Caco-2 (cell line): ENCODE measurements at regions of chrX and their contacts with region 1.

Region 1: DNA sequence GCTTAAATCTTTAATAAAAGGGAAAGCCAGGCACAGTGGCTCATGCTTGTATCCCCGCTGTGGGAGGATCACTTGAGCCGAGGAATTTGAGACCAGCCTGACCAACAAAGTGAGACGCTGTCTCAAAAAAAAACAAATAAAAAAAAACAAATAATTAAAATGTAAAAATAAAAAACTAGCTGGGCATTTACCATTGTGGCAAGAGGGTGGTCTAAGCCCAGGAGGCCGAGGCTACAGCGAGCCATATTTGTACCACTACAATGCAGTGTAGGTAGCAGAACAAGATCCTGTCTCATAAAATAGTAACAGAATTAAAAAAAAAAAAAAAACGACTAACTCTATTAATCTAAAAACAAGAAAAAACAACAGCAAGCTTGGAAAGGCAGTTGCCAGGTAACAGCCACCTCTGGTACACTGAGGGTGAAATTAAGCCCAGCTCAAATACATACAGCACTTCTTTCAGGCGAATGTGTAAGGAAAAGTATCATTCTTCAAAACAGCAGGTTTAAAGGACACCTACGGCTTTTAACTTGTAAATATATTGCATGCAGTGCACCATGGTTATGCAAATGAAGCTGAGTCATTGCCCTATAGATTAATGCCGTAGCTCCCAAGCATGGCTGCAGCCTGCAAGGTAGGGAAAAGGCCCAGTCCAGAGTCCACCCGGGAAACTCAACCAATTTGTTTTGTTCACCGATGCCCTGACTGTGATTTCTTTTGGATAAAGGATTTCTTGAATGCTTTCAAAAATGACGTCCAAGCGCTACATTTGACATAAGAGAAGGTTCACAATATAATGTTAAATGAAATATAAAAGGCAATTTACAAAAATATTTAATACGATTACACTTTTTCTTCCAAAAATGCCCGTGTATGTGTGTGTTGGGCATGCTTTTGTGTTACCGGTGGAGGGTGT is 14.5 kb upstream of the TXLNG start:
- DNase-seq: peak; percentile 72 to 82
- H3K4me3 ChIP-seq: no peak overlapping the region; the same call in 1 of the 2 replicates
- H3K4me3 Mint-ChIP-seq: peak overlapping the region; percentile 60
- H3K27ac Mint-ChIP-seq: peak overlapping the region; percentile 98
- H3K4me1 ChIP-seq: 0 out of 2 replicates have a peak, but pooled peaks cover 7% of the 10 kb centered on the region
- H3K4me1 Mint-ChIP-seq: no peaks in the 10 kb centered on the region
- H3K27me3 ChIP-seq: no peaks in the 10 kb centered on the region
- H3K27me3 Mint-ChIP-seq: no peaks in the 10 kb centered on the region
- CTCF ChIP-seq: no peak

Region 2: GRCh38 chrX:16719334-16720084 is 52.2 kb before region 1 on chrX and contains the start of gene SYAP1:
- CTCF ChIA-PET with region 1: no interaction called
- POLR2A ChIA-PET with region 1: interaction called, 32 read pairs
- intact Hi-C with region 1: no loop called
- DNase-seq: peak; percentile 94
- H3K4me3 ChIP-seq: peak within 1 kb of the TSS; percentile 65
- H3K4me3 Mint-ChIP-seq: peak within 1 kb of the TSS; percentile 85
- H3K27ac Mint-ChIP-seq: peak within 1 kb of the TSS; percentile 97
- H3K4me1 ChIP-seq: peaks cover under 1% of the 10 kb centered on the region; the same call in 1 of the 2 replicates
- H3K4me1 Mint-ChIP-seq: peaks cover 12% of the 10 kb centered on the region
- H3K27me3 ChIP-seq: no peaks in the 10 kb centered on the region
- H3K27me3 Mint-ChIP-seq: no peaks in the 10 kb centered on the region
- CTCF ChIP-seq: no peak
- total RNA-seq, gene SYAP1: 32.8 and 35.7 TPM in 2 replicates

Region 3: DNA sequence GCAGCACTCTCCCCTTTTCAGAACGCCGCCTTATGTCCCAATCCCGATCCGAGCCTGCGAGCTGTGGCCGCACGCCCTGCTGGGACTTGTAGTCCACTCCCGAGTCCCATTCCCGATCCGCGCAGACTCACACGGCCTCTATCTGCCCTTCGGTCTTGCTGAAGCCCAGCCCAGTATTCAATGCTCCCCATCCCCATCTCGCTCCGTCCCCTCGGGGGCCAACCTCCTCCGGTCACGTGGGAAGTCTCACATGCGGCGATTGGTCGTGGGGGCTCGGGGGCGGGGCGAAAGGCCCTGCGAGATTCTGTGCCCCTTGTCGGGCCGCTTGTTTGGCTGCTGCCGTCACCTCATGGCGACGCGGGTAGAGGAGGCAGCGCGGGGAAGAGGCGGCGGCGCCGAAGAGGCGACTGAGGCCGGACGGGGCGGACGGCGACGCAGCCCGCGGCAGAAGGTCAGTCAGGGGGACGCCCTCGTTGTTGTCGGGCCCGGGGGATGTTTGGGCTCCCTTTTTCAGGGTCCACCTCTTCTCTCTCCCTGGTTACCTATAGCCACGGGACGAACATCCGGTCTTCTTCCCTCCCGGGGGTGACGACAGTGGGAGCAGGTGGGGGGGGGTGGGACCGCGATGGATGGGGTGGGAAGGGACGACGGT is 14.5 kb after region 1 on chrX and contains the start of gene TXLNG:
- CTCF ChIA-PET with region 1: no interaction called
- POLR2A ChIA-PET with region 1: interaction called, 15 read pairs
- intact Hi-C with region 1: loop called (anchors 2 kb)
- DNase-seq: peak; percentile 96 to 98
- H3K4me3 ChIP-seq: peak within 1 kb of the TSS; percentile 82
- H3K4me3 Mint-ChIP-seq: peak within 1 kb of the TSS; percentile 99
- H3K27ac Mint-ChIP-seq: peak within 1 kb of the TSS; percentile 94
- H3K4me1 ChIP-seq: no peaks in the 10 kb centered on the region
- H3K4me1 Mint-ChIP-seq: no peaks in the 10 kb centered on the region
- H3K27me3 ChIP-seq: no peaks in the 10 kb centered on the region
- H3K27me3 Mint-ChIP-seq: no peaks in the 10 kb centered on the region
- CTCF ChIP-seq: no peak
- total RNA-seq, gene TXLNG: 18.2 and 18.3 TPM in 2 replicates